CD4-positive, alpha-beta memory T cell (primary cell): ENCODE measurements at regions of chr11 and their contacts with region 1.

Region 1: DNA sequence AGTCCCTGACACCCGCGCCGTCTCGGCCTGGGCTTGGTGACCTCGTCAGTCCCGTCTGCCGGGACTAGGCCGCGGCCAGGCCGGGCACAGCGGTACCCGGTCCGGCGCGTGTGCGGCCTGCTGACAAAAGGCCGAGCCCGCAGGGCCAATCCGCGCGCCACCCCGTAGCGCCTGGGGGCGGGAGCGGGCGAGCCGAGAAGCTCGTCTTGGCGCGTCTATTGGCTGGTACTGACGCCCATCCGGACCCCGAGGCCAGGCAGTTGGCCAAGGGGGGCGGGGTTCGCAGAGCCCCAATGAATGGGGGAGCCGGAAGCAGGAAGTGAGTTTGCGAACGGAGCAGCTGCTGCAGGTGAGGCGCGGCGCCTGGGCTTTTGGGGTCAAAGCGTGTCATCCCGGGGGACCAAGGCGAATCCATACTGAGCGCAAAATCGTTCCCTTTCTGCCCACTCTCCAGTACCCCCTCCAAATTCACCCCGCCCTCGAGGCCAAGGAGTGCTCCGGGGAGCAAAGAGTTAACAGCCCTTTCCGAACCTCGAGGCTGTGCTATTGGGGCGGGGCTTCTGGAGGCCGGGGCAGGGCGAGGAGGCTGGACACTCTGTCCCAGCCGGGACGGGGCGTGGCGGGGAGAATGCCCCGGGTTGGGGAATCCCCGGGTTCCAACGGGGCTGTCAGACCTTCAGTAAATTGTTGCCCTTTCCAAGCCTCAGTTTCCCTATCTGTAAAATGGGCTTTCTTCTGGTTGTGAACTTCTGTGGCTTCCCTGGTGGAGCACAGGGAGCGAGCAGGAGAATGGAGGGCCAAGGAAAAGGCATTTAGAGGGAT is at the start of gene DPP3:
- DNase-seq: peak; percentile 94 to 96 (median 96)
- H3K4me3 ChIP-seq: peak within 1 kb of the TSS; percentile 88 to 90
- H3K4me3 Mint-ChIP-seq: peak within 1 kb of the TSS; percentile 87 to 96 (median 90)
- H3K27ac ChIP-seq: peak within 1 kb of the TSS; percentile 81
- H3K27ac Mint-ChIP-seq: peak within 1 kb of the TSS; percentile 78 to 94 (median 91)
- H3K4me1 ChIP-seq: peaks cover 20% of the 10 kb centered on the region
- H3K4me1 Mint-ChIP-seq: peaks cover 13 to 48% (median 21%) of the 10 kb centered on the region in 4 donors
- H3K27me3 ChIP-seq: no peaks in the 10 kb centered on the region
- H3K27me3 Mint-ChIP-seq: no peaks in the 10 kb centered on the region
- total RNA-seq, gene DPP3: 21.0 to 24.0 TPM

Region 2: DNA sequence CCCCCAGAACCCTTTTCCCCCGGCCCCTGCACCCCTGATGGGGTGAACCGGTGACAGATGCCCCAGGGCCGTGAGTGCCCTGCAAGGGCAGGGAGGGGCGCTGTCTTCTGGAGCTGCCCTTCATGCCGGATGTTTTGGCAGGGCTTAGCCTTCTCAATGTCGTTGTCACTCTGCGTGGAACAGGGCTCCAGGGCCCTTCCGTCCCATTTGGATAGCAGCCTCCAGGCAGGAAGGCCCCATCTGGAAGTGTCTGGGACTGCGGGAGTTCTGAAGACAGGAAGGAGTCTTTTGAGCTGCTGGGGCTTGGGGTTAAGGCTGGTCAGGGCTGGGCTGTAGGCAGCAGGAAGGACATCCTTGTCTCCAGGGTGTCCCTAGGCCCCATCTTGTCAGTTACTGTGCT is 1089.3 kb before region 1 on chr11:
- CTCF ChIA-PET with region 1: no interaction called
- POLR2A ChIA-PET with region 1: no interaction called
- intact Hi-C with region 1: no loop called
- DNase-seq: no peak
- H3K4me3 ChIP-seq: no peak overlapping the region
- H3K4me3 Mint-ChIP-seq: peak overlapping the region in 2 of 8 donors; percentile 15 to 52
- H3K27ac ChIP-seq: no peak overlapping the region
- H3K27ac Mint-ChIP-seq: peak overlapping the region in 2 of 7 donors; percentile 42 to 61
- H3K4me1 ChIP-seq: peaks cover 51% of the 10 kb centered on the region
- H3K4me1 Mint-ChIP-seq: peaks cover 17 to 56% (median 32%) of the 10 kb centered on the region in 4 donors
- H3K27me3 ChIP-seq: no peaks in the 10 kb centered on the region
- H3K27me3 Mint-ChIP-seq: no peaks in the 10 kb centered on the region

Region 3: DNA sequence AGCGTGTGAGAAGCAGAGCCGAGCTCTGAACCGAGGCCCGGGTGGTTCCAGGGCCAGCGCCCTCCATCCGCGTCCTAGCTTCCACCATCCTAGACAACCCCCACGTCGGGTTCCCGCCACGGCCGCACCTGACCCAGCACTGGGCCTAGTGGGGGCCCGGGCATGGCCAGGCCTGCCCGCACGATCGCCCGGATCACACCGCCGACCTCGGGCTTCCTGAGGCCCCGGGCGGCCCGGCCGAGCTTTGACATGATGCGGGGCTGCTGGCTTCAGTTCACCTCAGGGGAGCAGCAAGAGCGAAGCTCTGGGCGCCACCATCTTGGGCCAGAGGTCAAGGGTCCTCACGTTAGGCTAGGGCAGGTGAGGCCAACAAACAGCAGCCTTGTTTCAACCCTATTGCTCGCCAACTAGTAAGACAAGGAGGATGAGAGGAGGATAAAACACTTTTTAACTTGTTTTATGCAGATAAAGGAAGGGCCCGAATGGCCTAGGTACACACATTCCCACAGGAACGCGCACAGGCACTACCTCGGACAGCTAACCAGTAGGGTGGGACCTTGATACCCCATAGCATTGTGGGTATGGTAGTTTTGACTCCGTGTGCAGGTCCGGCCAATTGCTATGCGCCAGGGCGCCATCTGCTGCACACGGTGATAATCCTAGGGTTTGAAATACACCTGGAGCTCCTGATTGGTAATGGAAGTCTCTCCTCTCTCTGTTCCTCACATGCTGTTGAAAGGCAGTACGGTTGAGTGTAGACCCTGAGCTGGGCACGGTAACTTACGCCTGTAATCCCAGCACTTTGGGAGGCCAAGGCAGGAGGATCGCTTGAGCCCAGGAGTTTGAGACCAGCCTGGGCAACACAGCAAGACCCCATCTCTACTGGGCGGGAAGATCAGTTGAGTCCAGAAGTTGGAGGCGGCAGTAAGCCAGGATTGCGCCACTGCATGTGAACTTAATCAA is 41.5 kb before region 1 on chr11 and contains the start of gene MRPL11:
- CTCF ChIA-PET with region 1: interaction called, 5 read pairs
- POLR2A ChIA-PET with region 1: interaction called, 21 read pairs
- intact Hi-C with region 1: loop called (anchors 1 kb)
- DNase-seq: peak; percentile 89 to 92 (median 91)
- H3K4me3 ChIP-seq: peak within 1 kb of the TSS; percentile 67 to 88
- H3K4me3 Mint-ChIP-seq: peak within 1 kb of the TSS; percentile 87 to 94 (median 91)
- H3K27ac ChIP-seq: peak within 1 kb of the TSS; percentile 69
- H3K27ac Mint-ChIP-seq: peak within 1 kb of the TSS; percentile 88 to 100 (median 98)
- H3K4me1 ChIP-seq: peaks cover 7% of the 10 kb centered on the region
- H3K4me1 Mint-ChIP-seq: peaks cover 6 to 17% (median 11%) of the 10 kb centered on the region in 4 donors
- H3K27me3 ChIP-seq: no peaks in the 10 kb centered on the region
- H3K27me3 Mint-ChIP-seq: peaks cover 2 to 3% of the 10 kb centered on the region in 2 donors
- total RNA-seq, gene MRPL11: 22.0 to 27.9 TPM

Region 4: GRCh38 chr11:66466225-66467027 is 13.9 kb before region 1 on chr11 and contains the start of gene PELI3:
- CTCF ChIA-PET with region 1: interaction called, 7 read pairs
- POLR2A ChIA-PET with region 1: interaction called, 72 read pairs
- intact Hi-C with region 1: loop called (anchors 1 kb)
- DNase-seq: peak; percentile 91 to 95 (median 92)
- H3K4me3 ChIP-seq: peak within 1 kb of the TSS; percentile 58 to 65
- H3K4me3 Mint-ChIP-seq: peak within 1 kb of the TSS; percentile 89 to 94 (median 90)
- H3K27ac ChIP-seq: peak within 1 kb of the TSS; percentile 81
- H3K27ac Mint-ChIP-seq: peak within 1 kb of the TSS; percentile 91 to 97 (median 95)
- H3K4me1 ChIP-seq: peaks cover 20% of the 10 kb centered on the region
- H3K4me1 Mint-ChIP-seq: peaks cover 13 to 33% (median 21%) of the 10 kb centered on the region in 4 donors
- H3K27me3 ChIP-seq: no peaks in the 10 kb centered on the region
- H3K27me3 Mint-ChIP-seq: no peaks in the 10 kb centered on the region
- total RNA-seq, gene PELI3: 25.3 to 25.9 TPM

Region 5: DNA sequence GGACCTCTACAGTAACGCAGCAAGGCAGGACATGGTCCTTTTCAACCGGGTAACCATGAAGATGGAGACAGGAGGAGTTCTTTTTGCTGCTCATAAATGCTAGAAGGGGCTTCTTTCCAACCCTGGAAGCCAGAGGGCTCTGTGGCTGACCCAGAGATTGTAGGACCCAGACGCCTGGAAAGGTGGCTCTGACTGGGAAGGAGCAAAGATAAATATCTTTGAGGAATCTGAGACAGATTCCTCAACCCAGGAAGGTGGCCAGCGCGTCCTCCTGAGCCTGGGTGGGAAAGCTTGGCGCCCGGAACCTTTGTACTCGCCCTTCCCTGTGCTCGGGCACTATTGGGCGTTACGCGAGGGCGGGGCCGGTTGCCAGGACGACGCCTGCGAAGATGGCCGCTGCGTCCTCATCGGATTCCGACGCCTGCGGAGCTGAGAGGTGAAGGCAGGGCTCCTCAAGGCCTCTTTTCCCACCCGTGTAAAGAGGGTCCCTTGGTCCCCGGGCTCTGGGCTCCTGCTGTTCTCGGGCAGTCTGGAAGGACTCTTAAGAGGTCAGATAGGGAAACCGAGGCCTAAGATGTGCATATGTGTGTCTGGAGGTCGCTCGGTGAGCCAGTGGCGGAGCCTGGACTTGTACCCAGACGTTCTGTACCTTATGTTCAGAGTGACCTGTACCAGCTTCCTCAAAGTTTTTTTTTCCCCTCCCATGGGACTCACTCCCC is 30.1 kb after region 1 on chr11 and contains the start of gene BBS1:
- CTCF ChIA-PET with region 1: interaction called, 4 read pairs
- POLR2A ChIA-PET with region 1: interaction called, 19 read pairs
- intact Hi-C with region 1: loop called (anchors 2 kb)
- DNase-seq: peak; percentile 75 to 79 (median 78)
- H3K4me3 ChIP-seq: peak within 1 kb of the TSS; percentile 90 to 94
- H3K4me3 Mint-ChIP-seq: peak within 1 kb of the TSS; percentile 86 to 91 (median 90)
- H3K27ac ChIP-seq: peak within 1 kb of the TSS; percentile 58
- H3K27ac Mint-ChIP-seq: peak within 1 kb of the TSS; percentile 56 to 91 (median 81)
- H3K4me1 ChIP-seq: peaks cover 18% of the 10 kb centered on the region
- H3K4me1 Mint-ChIP-seq: peaks cover 8 to 19% (median 17%) of the 10 kb centered on the region in 4 donors
- H3K27me3 ChIP-seq: no peaks in the 10 kb centered on the region
- H3K27me3 Mint-ChIP-seq: no peaks in the 10 kb centered on the region
- total RNA-seq, gene BBS1: 37.3 to 41.3 TPM